ENCODE measurements at regions of chr2 and their contacts with region 1.

Region 1: GRCh38 chr2:177164584-177165052 is 48.0 kb upstream of the HNRNPA3 start:
- DNase-seq: peak; percentile 68
- ATAC-seq: peak; percentile 46
- H3K4me3 ChIP-seq: peak overlapping the region; percentile 29 to 50
- H3K27ac ChIP-seq: peak overlapping the region; percentile 65; the same call in 1 of the 2 replicates
- H3K4me1 ChIP-seq: peaks cover 42 to 67% of the 10 kb centered on the region in 2 experiments
- H3K27me3 ChIP-seq: no peaks in the 10 kb centered on the region
- CTCF ChIP-seq: peak; percentile 96 to 100 (median 100)
- POLR2A ChIP-seq: no peak
- RAD21 ChIP-seq: peak; percentile 100

Region 2: DNA sequence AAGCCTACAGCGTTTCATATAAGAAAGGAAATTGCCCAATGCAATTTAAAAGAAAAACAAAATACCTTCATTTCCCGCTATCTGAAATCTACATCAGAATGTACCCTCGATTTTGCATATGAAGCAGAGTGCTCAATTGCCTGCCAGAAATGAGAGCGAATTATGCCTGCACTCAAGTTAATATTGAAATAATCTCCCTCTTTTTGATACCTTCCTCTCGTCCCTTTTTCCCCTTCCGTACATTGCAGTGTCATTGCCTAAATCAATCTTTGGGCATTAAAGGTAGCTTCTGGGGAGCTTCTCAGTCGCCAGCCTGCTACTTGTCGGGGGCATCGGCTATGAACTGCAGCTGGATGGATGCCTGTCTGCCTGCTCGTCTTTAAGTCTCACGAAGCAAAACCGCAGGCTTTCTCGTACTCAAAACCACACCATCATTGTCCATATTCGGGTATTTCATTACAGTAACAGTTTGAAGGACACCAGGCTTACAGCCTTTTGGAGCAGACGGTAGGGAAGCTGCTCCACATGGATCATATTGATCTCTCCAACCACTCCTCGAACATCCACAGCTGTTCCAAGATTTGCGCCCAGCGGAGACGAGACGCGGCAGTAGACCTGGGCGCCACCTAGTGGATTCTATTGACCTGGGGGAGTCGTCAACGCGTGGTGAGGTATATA is 16.0 kb before region 1 on chr2:
- CTCF ChIA-PET with region 1: interaction called, 35 read pairs
- POLR2A ChIA-PET with region 1: no interaction called
- RAD21 ChIA-PET with region 1: no interaction called
- intact Hi-C with region 1: no loop called
- DNase-seq: peak; percentile 68
- ATAC-seq: peak; percentile 99
- H3K4me3 ChIP-seq: peak overlapping the region; percentile 25 to 51
- H3K27ac ChIP-seq: no peak overlapping the region
- H3K4me1 ChIP-seq: peaks cover 0 to 8% of the 10 kb centered on the region in 2 experiments; a peak in 2 of 4 replicates
- H3K27me3 ChIP-seq: no peaks in the 10 kb centered on the region
- CTCF ChIP-seq: peak; percentile 82 to 94 (median 90); a peak in 5 of 6 replicates
- POLR2A ChIP-seq: no peak
- RAD21 ChIP-seq: peak; percentile 79

Region 3: GRCh38 chr2:177254433-177255226 is 90.0 kb after region 1 on chr2:
- CTCF ChIA-PET with region 1: interaction called, 12 read pairs
- POLR2A ChIA-PET with region 1: interaction called, 3 read pairs
- RAD21 ChIA-PET with region 1: interaction called in 1 of 2 experiments, 4 read pairs
- intact Hi-C with region 1: no loop called
- DNase-seq: peak; percentile 60
- ATAC-seq: peak; percentile 92
- H3K4me3 ChIP-seq: no peak overlapping the region
- H3K27ac ChIP-seq: peak overlapping the region; percentile 26; the same call in 1 of the 2 replicates
- H3K4me1 ChIP-seq: peaks cover 50 to 82% of the 10 kb centered on the region in 2 experiments
- H3K27me3 ChIP-seq: no peaks in the 10 kb centered on the region
- CTCF ChIP-seq: peak; percentile 48 to 94 (median 87); a peak in 5 of 6 replicates
- POLR2A ChIP-seq: no peak
- RAD21 ChIP-seq: peak; percentile 61

Region 4: GRCh38 chr2:177332041-177332991 is 167.7 kb after region 1 on chr2:
- CTCF ChIA-PET with region 1: interaction called, 65 read pairs
- POLR2A ChIA-PET with region 1: interaction called, 5 read pairs
- RAD21 ChIA-PET with region 1: interaction called in 1 of 2 experiments, 9 read pairs
- intact Hi-C with region 1: loop called (anchors 1 kb)
- DNase-seq: peak; percentile 39
- ATAC-seq: peak; percentile 78
- H3K4me3 ChIP-seq: no peak overlapping the region
- H3K27ac ChIP-seq: no peak overlapping the region
- H3K4me1 ChIP-seq: peaks cover 8 to 21% of the 10 kb centered on the region in 2 experiments
- H3K27me3 ChIP-seq: no peaks in the 10 kb centered on the region
- CTCF ChIP-seq: peak; percentile 57 to 82 (median 64); a peak in 5 of 6 replicates
- POLR2A ChIP-seq: no peak
- RAD21 ChIP-seq: peak; percentile 89

Region 5: DNA sequence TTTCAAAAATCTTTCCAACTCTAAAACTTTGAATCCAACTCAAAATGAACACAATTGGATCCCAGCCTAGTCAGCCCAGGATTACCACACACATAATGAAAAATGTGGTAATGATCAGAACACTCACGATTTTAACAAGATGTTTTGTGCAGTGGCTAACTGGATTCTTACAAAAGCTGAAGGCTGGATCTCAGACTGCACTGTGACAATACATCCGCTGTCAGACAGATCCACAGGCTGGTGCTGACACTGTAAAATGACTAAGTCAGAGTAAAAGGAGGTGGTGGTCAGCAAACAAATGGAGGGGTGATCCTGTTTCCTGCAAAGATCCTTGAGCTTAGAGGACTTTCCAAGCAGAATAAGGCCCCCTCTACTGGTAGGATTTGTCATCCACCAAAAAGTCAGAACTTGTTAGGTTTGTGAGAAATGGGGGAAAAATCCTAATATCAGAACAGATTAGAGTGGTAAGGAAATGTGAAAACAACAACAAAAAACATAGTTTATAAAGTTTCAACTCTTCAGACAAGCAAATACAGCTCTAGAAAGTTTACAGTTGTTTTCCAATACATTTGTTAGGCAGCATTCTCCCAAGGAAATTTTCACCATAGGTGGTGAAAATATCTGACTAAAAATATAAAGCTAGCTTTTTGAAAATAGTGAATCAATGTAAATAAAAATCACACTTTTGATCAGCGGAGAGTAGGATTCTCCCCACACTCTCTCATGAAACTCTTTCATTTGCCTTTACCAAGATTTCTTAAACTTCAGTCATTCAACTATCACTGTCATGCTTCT is 439.9 kb after region 1 on chr2:
- CTCF ChIA-PET with region 1: interaction called, 21 read pairs
- POLR2A ChIA-PET with region 1: no interaction called
- RAD21 ChIA-PET with region 1: no interaction called
- intact Hi-C with region 1: loop called (anchors 1 kb)
- DNase-seq: peak; percentile 53
- ATAC-seq: peak; percentile 82
- H3K4me3 ChIP-seq: no peak overlapping the region
- H3K27ac ChIP-seq: no peak overlapping the region
- H3K4me1 ChIP-seq: no peaks in the 10 kb centered on the region
- H3K27me3 ChIP-seq: no peaks in the 10 kb centered on the region
- CTCF ChIP-seq: peak; percentile 70 to 85 (median 77); a peak in 5 of 6 replicates
- POLR2A ChIP-seq: no peak
- RAD21 ChIP-seq: peak; percentile 64